ENCODE measurements at regions of chr12 and their contacts with region 1.

Region 1: GRCh38 chr12:94207849-94208621 is 59.7 kb downstream of the PLXNC1 start:
- DNase-seq: peak; percentile 33
- H3K4me3 Mint-ChIP-seq: peak overlapping the region; percentile 77
- H3K27ac Mint-ChIP-seq: peak overlapping the region; percentile 98
- H3K4me1 Mint-ChIP-seq: peaks cover 55% of the 10 kb centered on the region
- H3K27me3 Mint-ChIP-seq: no peaks in the 10 kb centered on the region

Region 2: DNA sequence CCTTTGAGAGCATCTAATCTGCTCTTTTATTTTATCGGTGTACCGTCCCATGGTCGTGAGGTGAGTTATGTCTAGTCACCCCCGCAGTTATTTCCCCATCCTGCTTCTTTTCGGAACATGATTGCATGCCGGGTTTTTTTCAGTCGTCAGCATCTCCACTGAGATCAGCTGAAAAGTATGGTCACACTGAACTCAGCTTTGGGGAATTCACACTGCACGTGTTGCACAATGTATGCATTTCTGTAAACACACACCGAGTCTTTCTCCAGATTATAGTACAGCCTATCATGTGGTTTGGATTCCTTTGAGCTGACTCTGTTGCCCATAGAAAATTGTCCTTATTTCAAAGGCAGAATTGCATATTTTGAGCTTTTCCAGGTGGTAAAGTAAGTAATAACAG is 35.1 kb before region 1 on chr12:
- intact Hi-C with region 1: loop called (anchors 1 kb)
- DNase-seq: no peak
- H3K4me3 Mint-ChIP-seq: no peak overlapping the region
- H3K27ac Mint-ChIP-seq: no peak overlapping the region
- H3K4me1 Mint-ChIP-seq: peaks cover 58% of the 10 kb centered on the region
- H3K27me3 Mint-ChIP-seq: no peaks in the 10 kb centered on the region

Region 3: GRCh38 chr12:94195443-94195842 is 12.6 kb before region 1 on chr12:
- intact Hi-C with region 1: no loop called
- DNase-seq: no peak
- H3K4me3 Mint-ChIP-seq: no peak overlapping the region
- H3K27ac Mint-ChIP-seq: no peak overlapping the region
- H3K4me1 Mint-ChIP-seq: peaks cover 11% of the 10 kb centered on the region
- H3K27me3 Mint-ChIP-seq: no peaks in the 10 kb centered on the region

Region 4: GRCh38 chr12:94262228-94263010 is 54.4 kb after region 1 on chr12:
- intact Hi-C with region 1: loop called (anchors 1 kb)
- DNase-seq: peak; percentile 52
- H3K4me3 Mint-ChIP-seq: peak overlapping the region; percentile 80
- H3K27ac Mint-ChIP-seq: peak overlapping the region; percentile 91
- H3K4me1 Mint-ChIP-seq: peaks cover 31% of the 10 kb centered on the region
- H3K27me3 Mint-ChIP-seq: no peaks in the 10 kb centered on the region

Region 5: GRCh38 chr12:94326727-94327126 is 118.7 kb after region 1 on chr12:
- intact Hi-C with region 1: loop called (anchors 1 kb)
- DNase-seq: no peak
- H3K4me3 Mint-ChIP-seq: no peak overlapping the region
- H3K27ac Mint-ChIP-seq: peak overlapping the region; percentile 44
- H3K4me1 Mint-ChIP-seq: peaks cover 35% of the 10 kb centered on the region
- H3K27me3 Mint-ChIP-seq: no peaks in the 10 kb centered on the region

Region 6: DNA sequence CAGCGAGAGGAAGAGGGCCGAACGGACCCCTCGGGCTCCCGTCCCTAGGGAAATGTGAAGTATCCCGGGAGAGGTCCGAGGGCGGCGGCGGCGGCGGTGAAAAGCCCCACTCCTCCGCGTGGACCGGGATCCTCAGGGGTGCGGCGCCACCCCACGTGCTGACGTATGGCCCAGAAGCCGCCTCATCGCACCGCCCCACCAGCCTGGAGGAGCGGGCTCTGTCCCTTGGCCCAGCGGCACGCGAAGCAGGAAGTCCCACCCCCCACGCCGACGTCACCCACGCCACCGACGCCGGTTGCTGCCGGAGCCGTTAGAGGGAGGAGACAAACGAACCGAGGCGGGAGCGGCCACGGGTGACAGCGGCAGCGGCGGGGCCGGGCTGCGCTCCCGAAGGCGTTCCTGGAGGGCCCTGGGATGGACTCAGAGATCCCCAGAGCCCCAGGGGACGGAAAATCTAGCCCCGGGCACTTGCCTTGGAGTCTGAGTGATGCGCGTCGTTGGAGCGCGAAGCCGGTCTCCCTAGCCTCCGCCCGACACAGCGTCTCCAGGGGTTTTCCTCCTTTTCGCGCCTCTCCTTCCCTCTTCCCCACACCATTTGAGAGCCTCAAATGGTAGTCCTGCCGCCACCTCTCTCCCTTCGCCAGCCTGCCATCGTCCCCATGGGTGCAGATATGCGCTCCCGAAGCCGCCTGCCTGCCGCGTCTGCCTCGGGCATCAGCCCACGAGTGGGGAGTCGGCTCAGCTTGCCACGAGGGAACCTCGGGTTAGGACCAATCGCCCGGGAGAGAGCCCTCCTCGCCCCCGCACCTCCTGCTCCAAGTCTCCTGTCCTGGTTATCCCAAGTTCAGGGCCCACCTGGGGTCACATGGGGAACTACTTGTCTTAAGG is 251.9 kb after region 1 on chr12 and contains the start of gene CEP83:
- intact Hi-C with region 1: loop called (anchors 1 kb)
- DNase-seq: peak; percentile 95
- H3K4me3 Mint-ChIP-seq: peak within 1 kb of the TSS; percentile 88
- H3K27ac Mint-ChIP-seq: peak within 1 kb of the TSS; percentile 92
- H3K4me1 Mint-ChIP-seq: peaks cover 27% of the 10 kb centered on the region
- H3K27me3 Mint-ChIP-seq: peaks cover 5% of the 10 kb centered on the region
- total RNA-seq, gene CEP83: 32.4 and 35.9 TPM in 2 replicates